ENCODE measurements at regions of chr11 and their contacts with region 1.

Region 1: GRCh38 chr11:27183672-27184457 is 143.2 kb downstream of the BBOX1 start:
- DNase-seq: peak; percentile 74
- H3K4me3 ChIP-seq: no peak overlapping the region
- H3K27ac ChIP-seq: no peak overlapping the region
- H3K4me1 ChIP-seq: peaks cover 0 to 20% (median 9%) of the 10 kb centered on the region in 4 donors
- H3K27me3 ChIP-seq: no peaks in the 10 kb centered on the region
- CTCF ChIP-seq: peak; percentile 52 to 74 (median 71)
- EP300 ChIP-seq: no peak
- POLR2A ChIP-seq: no peak

Region 2: GRCh38 chr11:26827567-26828081 is 356.2 kb before region 1 on chr11:
- intact Hi-C with region 1: no loop called
- DNase-seq: peak; percentile 60
- H3K4me3 ChIP-seq: no peak overlapping the region
- H3K27ac ChIP-seq: peak overlapping the region; percentile 49 to 74 (median 66)
- H3K4me1 ChIP-seq: peaks cover 0 to 21% (median 18%) of the 10 kb centered on the region in 4 donors
- H3K27me3 ChIP-seq: no peaks in the 10 kb centered on the region
- CTCF ChIP-seq: no peak
- EP300 ChIP-seq: no peak
- POLR2A ChIP-seq: no peak

Region 3: GRCh38 chr11:27129686-27130085 is 54.2 kb before region 1 on chr11:
- intact Hi-C with region 1: no loop called
- DNase-seq: no peak
- H3K4me3 ChIP-seq: no peak overlapping the region
- H3K27ac ChIP-seq: no peak overlapping the region
- H3K4me1 ChIP-seq: peaks cover 0 to 4% (median 0%) of the 10 kb centered on the region in 4 donors
- H3K27me3 ChIP-seq: no peaks in the 10 kb centered on the region
- CTCF ChIP-seq: no peak
- EP300 ChIP-seq: no peak
- POLR2A ChIP-seq: no peak

Region 4: GRCh38 chr11:27281740-27282590 is 98.1 kb after region 1 on chr11:
- intact Hi-C with region 1: loop called (anchors 5 kb)
- DNase-seq: no peak
- H3K4me3 ChIP-seq: no peak overlapping the region
- H3K27ac ChIP-seq: peak overlapping the region in 1 of 4 donors; percentile 12
- H3K4me1 ChIP-seq: peaks cover 0 to 14% (median 0%) of the 10 kb centered on the region in 4 donors
- H3K27me3 ChIP-seq: no peaks in the 10 kb centered on the region
- CTCF ChIP-seq: no peak
- EP300 ChIP-seq: no peak
- POLR2A ChIP-seq: no peak

Region 5: DNA sequence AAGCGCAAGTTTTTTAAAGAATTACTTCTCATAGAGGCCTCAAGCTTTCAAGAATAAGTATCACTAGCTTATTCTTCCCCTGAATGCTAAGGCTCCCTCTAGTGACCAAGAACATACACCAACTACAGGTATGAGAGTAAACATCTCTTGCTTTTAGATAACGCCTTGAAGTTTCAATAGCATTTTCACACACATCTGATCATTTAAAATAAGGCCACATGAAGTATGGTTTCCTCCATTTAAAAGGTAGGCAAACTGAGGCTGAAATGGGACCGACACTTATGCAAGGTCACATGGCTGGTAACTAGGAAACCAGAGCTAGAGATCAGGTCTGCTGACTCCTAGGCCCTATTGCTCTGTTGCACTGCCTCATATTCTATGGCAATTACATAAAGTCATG is 112.6 kb after region 1 on chr11:
- intact Hi-C with region 1: loop called (anchors 1 kb)
- DNase-seq: no peak
- H3K4me3 ChIP-seq: no peak overlapping the region
- H3K27ac ChIP-seq: no peak overlapping the region
- H3K4me1 ChIP-seq: peaks cover 0 to 10% (median 2%) of the 10 kb centered on the region in 4 donors
- H3K27me3 ChIP-seq: no peaks in the 10 kb centered on the region
- CTCF ChIP-seq: peak; percentile 49 to 72 (median 62)
- EP300 ChIP-seq: no peak
- POLR2A ChIP-seq: no peak

Region 6: GRCh38 chr11:27485930-27486773 is 302.3 kb after region 1 on chr11:
- intact Hi-C with region 1: loop called (anchors 2 kb)
- DNase-seq: no peak
- H3K4me3 ChIP-seq: no peak overlapping the region
- H3K27ac ChIP-seq: no peak overlapping the region
- H3K4me1 ChIP-seq: no peaks in the 10 kb centered on the region
- H3K27me3 ChIP-seq: no peaks in the 10 kb centered on the region
- CTCF ChIP-seq: peak; percentile 89 to 94 (median 90)
- EP300 ChIP-seq: no peak
- POLR2A ChIP-seq: no peak

Region 7: DNA sequence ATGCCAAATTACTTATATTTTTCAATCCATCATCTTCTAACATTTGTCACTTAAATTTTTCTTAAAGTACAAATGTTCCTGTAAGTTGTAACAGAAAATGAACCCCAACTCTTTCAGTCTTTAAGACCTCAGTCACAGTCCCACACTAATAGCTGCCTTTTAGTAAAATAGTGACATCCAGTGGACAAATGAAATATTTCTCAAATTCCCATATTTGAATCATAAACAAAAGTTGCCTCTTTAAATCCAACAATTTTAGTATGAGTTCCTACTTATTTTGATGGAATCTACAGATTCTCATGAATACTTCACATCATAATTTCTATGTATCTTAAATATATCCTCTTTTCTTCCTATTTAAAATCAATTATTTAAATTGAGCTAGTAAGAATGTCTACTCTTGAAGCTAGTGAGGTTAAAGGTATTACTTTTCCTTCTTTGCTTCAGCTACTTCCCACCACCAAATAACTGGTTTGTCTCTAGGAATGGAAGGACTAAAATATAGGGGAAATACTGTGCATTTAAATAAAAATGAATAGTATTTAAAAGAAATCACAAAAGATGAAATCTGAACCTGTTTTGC is 313.5 kb after region 1 on chr11:
- intact Hi-C with region 1: loop called (anchors 2 kb)
- DNase-seq: no peak
- H3K4me3 ChIP-seq: no peak overlapping the region
- H3K27ac ChIP-seq: peak overlapping the region in 2 of 4 donors; percentile 38 to 44
- H3K4me1 ChIP-seq: peaks cover 0 to 34% (median 25%) of the 10 kb centered on the region in 4 donors
- H3K27me3 ChIP-seq: no peaks in the 10 kb centered on the region
- CTCF ChIP-seq: peak in 1 of 4 experiments; percentile 48
- EP300 ChIP-seq: no peak
- POLR2A ChIP-seq: no peak

Measured in sigmoid colon (tissue), 7 donors.